ENCODE measurements at regions of chr10 and their contacts with region 1.

Region 1: DNA sequence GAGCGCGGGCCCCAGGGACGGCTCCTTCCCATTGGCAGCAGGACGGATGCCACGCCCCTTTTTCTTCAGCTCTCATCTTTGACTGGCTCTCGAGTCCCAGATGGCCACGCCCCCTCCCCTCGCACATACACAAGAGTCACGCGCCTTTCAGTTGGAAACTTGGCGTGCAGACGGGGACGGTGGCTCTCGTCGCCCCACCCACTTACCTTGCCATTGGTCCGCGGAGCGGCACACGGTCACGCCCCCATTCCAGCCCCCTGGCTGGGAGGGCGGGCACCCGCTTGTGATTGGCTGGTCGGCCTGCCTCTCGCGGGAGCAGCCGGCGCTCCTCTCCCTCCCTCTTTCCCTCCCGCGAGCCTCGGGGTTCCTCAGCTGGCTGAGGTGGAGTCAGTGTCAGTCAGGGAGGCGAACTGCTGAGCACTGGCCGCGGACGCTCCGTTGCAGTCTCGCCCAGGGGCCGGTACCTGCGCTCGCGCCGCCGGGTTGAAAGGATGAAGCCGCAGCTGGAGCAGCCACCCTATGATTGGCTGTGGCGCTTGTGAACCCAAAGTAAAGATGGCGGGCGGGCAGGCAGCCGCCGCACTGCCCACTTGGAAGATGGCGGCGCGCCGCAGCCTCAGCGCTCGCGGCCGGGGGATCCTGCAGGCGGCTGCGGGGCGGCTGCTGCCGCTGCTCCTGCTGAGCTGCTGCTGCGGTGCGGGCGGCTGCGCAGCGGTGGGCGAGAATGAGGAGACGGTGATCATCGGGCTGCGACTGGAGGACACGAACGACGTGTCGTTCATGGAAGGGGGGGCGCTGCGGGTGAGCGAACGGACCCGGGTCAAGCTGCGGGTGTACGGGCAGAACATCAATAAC is at the start of gene CNNM2:
- DNase-seq: peak; percentile 99 to 100
- ATAC-seq: peak; percentile 88 to 96 (median 89)
- H3K4me3 ChIP-seq: peak within 1 kb of the TSS; percentile 97
- H3K4me3 Mint-ChIP-seq: peak within 1 kb of the TSS; percentile 94
- H3K27ac ChIP-seq: peak within 1 kb of the TSS; percentile 78
- H3K27ac Mint-ChIP-seq: peak within 1 kb of the TSS; percentile 94 to 98
- H3K4me1 ChIP-seq: peaks cover 27% of the 10 kb centered on the region
- H3K4me1 Mint-ChIP-seq: peaks cover 36 to 63% of the 10 kb centered on the region in 2 donors
- H3K27me3 ChIP-seq: no peaks in the 10 kb centered on the region
- H3K27me3 Mint-ChIP-seq: peaks cover 10 to 12% of the 10 kb centered on the region in 2 donors
- CTCF ChIP-seq: no peak
- total RNA-seq, gene CNNM2: 8.6 to 18.0 (median 16.7) TPM

Region 2: GRCh38 chr10:102743588-102744373 is 174.4 kb before region 1 on chr10 and contains the start of gene WBP1L:
- intact Hi-C with region 1: loop called (anchors 1 kb)
- DNase-seq: peak; percentile 92 to 99
- ATAC-seq: peak; percentile 96 to 99 (median 97)
- H3K4me3 ChIP-seq: peak within 1 kb of the TSS; percentile 85
- H3K4me3 Mint-ChIP-seq: peak within 1 kb of the TSS; percentile 93
- H3K27ac ChIP-seq: peak within 1 kb of the TSS; percentile 71
- H3K27ac Mint-ChIP-seq: peak within 1 kb of the TSS; percentile 78 to 86
- H3K4me1 ChIP-seq: peaks cover 16% of the 10 kb centered on the region
- H3K4me1 Mint-ChIP-seq: peaks cover 50 to 53% of the 10 kb centered on the region in 2 donors
- H3K27me3 ChIP-seq: no peaks in the 10 kb centered on the region
- H3K27me3 Mint-ChIP-seq: no peaks in the 10 kb centered on the region
- CTCF ChIP-seq: no peak
- total RNA-seq, gene WBP1L: 34.6 to 48.4 (median 47.9) TPM

Region 3: DNA sequence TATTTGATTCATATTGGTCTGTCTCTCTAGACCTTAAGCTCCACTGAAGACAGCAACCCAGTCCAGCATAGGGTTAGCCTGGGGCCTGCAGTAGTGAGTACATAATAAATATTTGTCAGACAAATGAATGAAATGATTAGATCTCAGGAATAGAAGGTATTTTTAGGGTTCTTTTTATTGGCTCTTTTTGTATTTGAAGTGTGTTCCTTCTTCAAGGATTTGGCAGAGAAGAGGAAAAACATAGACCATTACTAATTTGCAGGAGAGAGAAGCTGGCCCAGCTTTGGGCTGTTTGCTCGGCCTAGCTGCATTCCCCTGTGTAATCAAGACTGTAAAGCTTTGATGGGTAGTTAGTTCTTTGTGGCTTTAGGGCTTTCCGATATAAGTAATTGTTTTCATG is 64.1 kb after region 1 on chr10:
- intact Hi-C with region 1: no loop called
- DNase-seq: no peak
- ATAC-seq: no peak
- H3K4me3 ChIP-seq: no peak overlapping the region
- H3K4me3 Mint-ChIP-seq: no peak overlapping the region
- H3K27ac ChIP-seq: no peak overlapping the region
- H3K27ac Mint-ChIP-seq: no peak overlapping the region
- H3K4me1 ChIP-seq: no peaks in the 10 kb centered on the region
- H3K4me1 Mint-ChIP-seq: no peaks in the 10 kb centered on the region
- H3K27me3 ChIP-seq: no peaks in the 10 kb centered on the region
- H3K27me3 Mint-ChIP-seq: no peaks in the 10 kb centered on the region
- CTCF ChIP-seq: no peak

Region 4: DNA sequence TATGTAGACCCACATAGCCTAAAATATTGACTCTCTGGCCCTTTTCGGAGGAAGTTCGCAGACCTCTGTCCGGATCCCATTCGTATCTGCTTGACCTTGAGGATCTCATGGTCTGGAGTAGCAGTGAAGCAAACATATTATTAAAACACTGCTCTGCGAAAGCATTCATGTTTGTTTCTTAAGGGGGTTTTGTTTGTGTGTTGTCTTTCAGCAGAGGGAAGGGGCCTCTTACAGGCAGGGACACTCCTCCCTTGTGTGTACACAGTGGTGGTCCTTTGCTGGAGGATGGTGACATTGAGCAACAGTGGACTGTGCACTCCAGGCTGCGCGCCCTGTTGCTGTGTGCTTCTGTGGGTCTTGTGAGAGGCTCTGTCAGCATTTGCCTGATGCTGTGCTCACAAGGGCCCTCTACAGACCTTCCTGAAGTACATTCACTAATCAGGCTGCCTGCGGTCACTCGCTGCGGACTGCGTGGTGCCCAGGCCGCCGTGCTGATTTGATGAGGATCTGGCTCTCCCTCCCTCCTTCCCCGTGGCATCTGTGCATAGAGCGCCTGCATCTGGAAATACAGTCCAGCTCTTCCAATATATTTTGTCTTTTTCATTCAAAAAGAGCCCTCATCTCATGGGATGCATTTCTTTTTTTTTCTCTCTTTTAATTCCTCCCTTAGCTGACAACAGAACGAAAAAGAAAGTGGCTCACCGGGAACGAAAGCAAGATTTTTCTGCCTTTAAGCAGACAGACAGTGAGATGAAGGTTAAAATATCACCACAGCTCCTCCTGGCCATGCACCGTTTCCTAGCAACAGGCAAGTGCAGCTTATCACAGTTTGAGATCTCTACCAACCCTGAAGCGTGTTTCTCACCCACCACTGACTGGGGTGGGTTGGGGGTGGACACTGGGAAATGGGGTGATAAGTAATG is 135.7 kb after region 1 on chr10:
- intact Hi-C with region 1: loop called (anchors 1 kb)
- DNase-seq: peak; percentile 65 to 84
- ATAC-seq: peak; percentile 85 to 93 (median 89)
- H3K4me3 ChIP-seq: peak overlapping the region; percentile 45
- H3K4me3 Mint-ChIP-seq: peak overlapping the region; percentile 91
- H3K27ac ChIP-seq: peak overlapping the region; percentile 76
- H3K27ac Mint-ChIP-seq: peak overlapping the region; percentile 92 to 93
- H3K4me1 ChIP-seq: peaks cover 25% of the 10 kb centered on the region
- H3K4me1 Mint-ChIP-seq: peaks cover 26 to 27% of the 10 kb centered on the region in 2 donors
- H3K27me3 ChIP-seq: no peaks in the 10 kb centered on the region
- H3K27me3 Mint-ChIP-seq: no peaks in the 10 kb centered on the region
- CTCF ChIP-seq: peak; percentile 20

Region 5: DNA sequence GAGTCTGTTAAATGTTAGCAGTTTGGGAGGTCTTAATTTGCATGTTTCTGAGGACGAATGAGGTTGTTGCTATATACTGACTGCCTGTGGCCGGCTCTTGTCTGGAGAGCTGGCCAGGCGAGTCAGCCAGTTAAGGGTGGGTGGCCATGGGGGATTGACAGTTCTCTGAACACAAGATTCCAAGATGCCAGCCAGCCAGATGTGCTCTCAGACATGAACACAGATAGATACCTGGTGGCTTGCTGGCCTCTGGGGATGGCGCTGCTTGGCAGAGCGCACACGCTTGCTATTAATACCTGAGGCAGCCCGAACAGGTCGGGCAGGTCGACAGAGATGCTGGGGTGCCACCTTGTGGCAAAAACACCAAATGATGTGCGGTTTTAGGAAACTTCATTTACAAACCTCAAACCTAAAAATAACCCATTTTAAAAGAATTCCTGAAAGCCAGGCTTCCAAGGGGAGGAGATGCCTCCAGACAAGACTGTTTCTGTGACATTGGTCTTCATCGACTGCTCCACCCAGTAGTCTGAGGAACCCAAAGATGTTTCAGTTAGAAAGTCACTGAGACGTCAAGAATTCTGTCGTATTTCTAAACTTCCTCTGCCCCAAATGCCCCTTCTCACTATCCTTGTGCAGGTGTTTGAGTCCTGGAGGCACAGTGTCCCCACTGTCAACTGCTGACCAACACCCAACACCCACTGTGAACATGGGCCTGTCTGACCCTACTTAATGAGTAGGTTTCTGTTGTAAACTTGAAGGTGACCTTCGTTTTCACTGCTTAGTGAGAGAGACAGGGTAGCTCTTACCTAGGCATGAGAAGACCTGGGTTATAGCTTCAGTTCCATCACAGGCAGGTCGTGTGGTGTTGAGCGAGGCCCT is 151.5 kb after region 1 on chr10:
- intact Hi-C with region 1: loop called (anchors 1 kb)
- DNase-seq: peak; percentile 57 to 86
- ATAC-seq: peak; percentile 80 to 88 (median 83)
- H3K4me3 ChIP-seq: no peak overlapping the region
- H3K4me3 Mint-ChIP-seq: no peak overlapping the region
- H3K27ac ChIP-seq: peak overlapping the region; percentile 9
- H3K27ac Mint-ChIP-seq: peak overlapping the region; percentile 80 to 82
- H3K4me1 ChIP-seq: peaks cover 25% of the 10 kb centered on the region
- H3K4me1 Mint-ChIP-seq: peaks cover 30 to 32% of the 10 kb centered on the region in 2 donors
- H3K27me3 ChIP-seq: no peaks in the 10 kb centered on the region
- H3K27me3 Mint-ChIP-seq: no peaks in the 10 kb centered on the region
- CTCF ChIP-seq: peak; percentile 76

Region 6: DNA sequence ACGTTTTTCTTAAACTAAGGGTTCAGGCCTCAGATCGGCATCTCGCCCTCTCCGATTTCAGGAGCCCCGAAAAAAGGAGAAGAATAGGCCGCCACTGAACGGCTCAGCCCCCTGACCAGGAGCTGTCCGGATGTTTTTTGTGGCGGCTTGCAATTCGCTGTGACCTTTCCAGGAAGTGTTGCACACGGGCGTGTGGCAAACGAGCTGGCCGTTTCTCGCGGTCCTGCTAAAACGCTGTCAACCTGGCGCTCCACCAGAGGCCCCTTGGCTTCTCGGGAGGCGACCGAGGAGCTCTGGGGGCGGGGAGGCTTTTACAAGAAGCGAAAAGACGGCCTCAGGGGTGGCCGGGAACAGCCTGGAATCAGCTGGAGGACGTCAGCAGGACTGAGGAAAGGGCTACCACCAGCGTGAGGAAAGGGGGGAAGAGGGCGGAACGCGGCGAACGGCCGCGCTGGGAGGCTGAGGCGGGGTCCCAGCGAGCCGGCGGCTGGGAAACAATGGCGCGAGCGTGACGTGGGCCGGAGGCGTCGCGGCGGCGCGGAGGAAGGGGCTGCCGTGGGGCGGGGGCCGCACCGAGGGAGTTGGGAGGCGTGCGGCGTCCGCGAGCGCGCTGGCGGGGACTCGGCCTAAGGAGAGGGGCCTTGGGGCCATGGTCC is 274.4 kb after region 1 on chr10:
- intact Hi-C with region 1: loop called (anchors 2 kb)
- DNase-seq: peak; percentile 62 to 71
- ATAC-seq: peak; percentile 54 to 72 (median 64)
- H3K4me3 ChIP-seq: peak overlapping the region; percentile 96
- H3K4me3 Mint-ChIP-seq: peak overlapping the region; percentile 100
- H3K27ac ChIP-seq: peak overlapping the region; percentile 93
- H3K27ac Mint-ChIP-seq: peak overlapping the region; percentile 95 to 99
- H3K4me1 ChIP-seq: peaks cover 26% of the 10 kb centered on the region
- H3K4me1 Mint-ChIP-seq: peaks cover 44 to 55% of the 10 kb centered on the region in 2 donors
- H3K27me3 ChIP-seq: no peaks in the 10 kb centered on the region
- H3K27me3 Mint-ChIP-seq: no peaks in the 10 kb centered on the region
- CTCF ChIP-seq: no peak

Region 7: GRCh38 chr10:103244663-103245271 is 326.6 kb after region 1 on chr10:
- intact Hi-C with region 1: loop called (anchors 1 kb)
- DNase-seq: peak; percentile 51 to 83
- ATAC-seq: peak; percentile 72 to 83 (median 79)
- H3K4me3 ChIP-seq: no peak overlapping the region
- H3K4me3 Mint-ChIP-seq: no peak overlapping the region
- H3K27ac ChIP-seq: no peak overlapping the region
- H3K27ac Mint-ChIP-seq: no peak overlapping the region
- H3K4me1 ChIP-seq: peaks cover 14% of the 10 kb centered on the region
- H3K4me1 Mint-ChIP-seq: peaks cover 6 to 10% of the 10 kb centered on the region in 2 donors
- H3K27me3 ChIP-seq: no peaks in the 10 kb centered on the region
- H3K27me3 Mint-ChIP-seq: peaks cover 0 to 4% of the 10 kb centered on the region in 2 donors
- CTCF ChIP-seq: peak; percentile 88

Region 8: DNA sequence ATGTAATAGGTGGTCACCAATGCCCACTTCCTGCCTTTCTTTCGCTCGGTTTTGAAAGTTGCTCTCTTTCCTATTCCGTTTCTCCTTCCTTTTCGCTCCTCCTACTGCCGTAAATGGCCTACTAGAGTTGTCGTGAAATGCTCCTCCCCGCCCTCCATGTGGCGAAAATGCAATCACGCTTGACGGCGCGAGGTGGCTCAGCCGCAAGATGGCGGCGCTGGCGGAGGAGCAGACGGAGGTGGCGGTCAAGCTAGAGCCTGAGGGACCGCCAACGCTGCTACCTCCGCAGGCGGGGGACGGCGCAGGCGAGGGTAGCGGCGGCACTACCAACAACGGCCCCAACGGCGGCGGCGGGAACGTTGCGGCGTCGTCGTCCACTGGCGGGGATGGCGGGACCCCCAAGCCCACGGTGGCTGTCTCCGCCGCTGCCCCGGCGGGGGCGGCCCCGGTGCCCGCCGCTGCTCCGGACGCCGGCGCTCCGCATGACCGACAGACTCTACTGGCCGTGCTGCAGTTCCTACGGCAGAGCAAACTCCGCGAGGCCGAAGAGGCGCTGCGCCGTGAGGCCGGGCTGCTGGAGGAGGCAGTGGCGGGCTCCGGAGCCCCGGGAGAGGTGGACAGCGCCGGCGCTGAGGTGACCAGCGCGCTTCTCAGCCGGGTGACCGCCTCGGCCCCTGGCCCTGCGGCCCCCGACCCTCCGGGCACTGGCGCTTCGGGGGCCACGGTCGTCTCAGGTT is 449.8 kb after region 1 on chr10 and contains the start of gene TAF5:
- intact Hi-C with region 1: loop called (anchors 5 kb)
- DNase-seq: peak; percentile 83 to 96
- ATAC-seq: peak; percentile 76 to 91 (median 77)
- H3K4me3 ChIP-seq: peak within 1 kb of the TSS; percentile 67
- H3K4me3 Mint-ChIP-seq: peak within 1 kb of the TSS; percentile 97
- H3K27ac ChIP-seq: peak within 1 kb of the TSS; percentile 69
- H3K27ac Mint-ChIP-seq: peak within 1 kb of the TSS; percentile 89 to 95
- H3K4me1 ChIP-seq: peaks cover 18% of the 10 kb centered on the region
- H3K4me1 Mint-ChIP-seq: peaks cover 19 to 22% of the 10 kb centered on the region in 2 donors
- H3K27me3 ChIP-seq: no peaks in the 10 kb centered on the region
- H3K27me3 Mint-ChIP-seq: no peaks in the 10 kb centered on the region
- CTCF ChIP-seq: no peak
- total RNA-seq, gene TAF5: 3.6 to 8.8 (median 6.3) TPM

Region 9: DNA sequence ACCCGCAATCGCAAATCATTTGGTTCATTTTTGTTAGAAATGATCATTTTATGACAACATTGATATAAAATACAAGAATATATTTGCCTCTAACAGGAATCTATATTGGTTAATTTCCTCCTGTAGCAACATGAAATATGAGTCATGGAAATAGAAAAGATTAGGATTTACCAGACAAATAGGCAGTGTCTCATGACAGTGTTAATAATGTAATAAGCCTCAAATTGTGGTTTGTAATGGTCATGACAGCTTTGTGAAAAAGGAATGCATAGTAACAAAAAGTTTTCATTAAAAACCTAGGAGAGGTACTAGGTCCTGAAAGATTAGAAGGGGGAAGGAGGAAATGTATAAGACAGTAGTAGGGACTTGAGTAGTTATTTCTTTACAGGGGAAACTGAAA is 1040.8 kb after region 1 on chr10:
- intact Hi-C with region 1: no loop called
- DNase-seq: no peak
- ATAC-seq: no peak
- H3K4me3 ChIP-seq: no peak overlapping the region
- H3K4me3 Mint-ChIP-seq: no peak overlapping the region
- H3K27ac ChIP-seq: no peak overlapping the region
- H3K27ac Mint-ChIP-seq: no peak overlapping the region
- H3K4me1 ChIP-seq: no peaks in the 10 kb centered on the region
- H3K4me1 Mint-ChIP-seq: no peaks in the 10 kb centered on the region
- H3K27me3 ChIP-seq: no peaks in the 10 kb centered on the region
- H3K27me3 Mint-ChIP-seq: peaks cover 3 to 9% of the 10 kb centered on the region in 2 donors
- CTCF ChIP-seq: no peak

Measured in natural killer cell (primary cell).